Thyroid gland (tissue), 4 donors: ENCODE measurements at regions of chr17 and their contacts with region 1.

Region 1: GRCh38 chr17:42819944-42820535 is 4.0 kb downstream of the BECN1 start:
- DNase-seq: peak; percentile 35 to 39
- H3K4me3 ChIP-seq: no peak overlapping the region
- H3K27ac ChIP-seq: no peak overlapping the region
- H3K4me1 ChIP-seq: peaks cover 4 to 18% of the 10 kb centered on the region in 2 donors
- H3K27me3 ChIP-seq: no peaks in the 10 kb centered on the region
- CTCF ChIP-seq: peak; percentile 11 to 54 (median 32)
- POLR2A ChIP-seq: no peak

Region 2: DNA sequence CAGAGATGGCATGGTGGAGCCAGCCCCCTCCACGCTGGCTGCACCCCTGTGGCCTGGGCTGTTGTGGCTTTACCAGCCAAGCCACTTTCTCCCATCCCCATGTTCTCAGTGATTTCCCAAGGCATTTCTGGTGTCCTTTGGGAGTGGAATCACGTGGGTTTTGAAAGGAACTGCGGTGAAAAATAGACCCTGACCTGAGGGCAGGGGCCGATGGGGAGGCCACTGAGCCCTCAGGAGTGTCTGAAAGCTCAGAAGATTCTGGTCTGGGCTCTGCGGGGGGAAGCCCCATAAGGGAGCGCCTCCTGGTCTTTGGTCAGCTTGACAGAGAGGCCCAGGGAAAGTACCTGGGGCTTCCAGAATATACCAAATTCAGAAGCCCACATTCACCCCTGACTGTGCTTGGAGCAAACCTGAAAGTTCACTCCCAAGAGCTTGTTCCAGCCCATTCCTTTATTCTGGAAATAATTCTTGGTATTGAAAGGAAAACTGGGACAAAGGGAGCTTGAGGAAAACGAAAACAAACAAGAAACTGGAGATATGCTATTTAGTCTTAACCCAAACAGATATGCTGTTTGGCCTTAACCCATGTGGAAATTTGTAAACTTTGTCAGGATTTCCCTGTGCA is 307.3 kb before region 1 on chr17:
- intact Hi-C with region 1: no loop called
- DNase-seq: no peak
- H3K4me3 ChIP-seq: no peak overlapping the region
- H3K27ac ChIP-seq: peak overlapping the region; percentile 45 to 76 (median 56)
- H3K4me1 ChIP-seq: peaks cover 10 to 58% of the 10 kb centered on the region in 2 donors
- H3K27me3 ChIP-seq: no peaks in the 10 kb centered on the region
- CTCF ChIP-seq: no peak
- POLR2A ChIP-seq: no peak

Region 3: DNA sequence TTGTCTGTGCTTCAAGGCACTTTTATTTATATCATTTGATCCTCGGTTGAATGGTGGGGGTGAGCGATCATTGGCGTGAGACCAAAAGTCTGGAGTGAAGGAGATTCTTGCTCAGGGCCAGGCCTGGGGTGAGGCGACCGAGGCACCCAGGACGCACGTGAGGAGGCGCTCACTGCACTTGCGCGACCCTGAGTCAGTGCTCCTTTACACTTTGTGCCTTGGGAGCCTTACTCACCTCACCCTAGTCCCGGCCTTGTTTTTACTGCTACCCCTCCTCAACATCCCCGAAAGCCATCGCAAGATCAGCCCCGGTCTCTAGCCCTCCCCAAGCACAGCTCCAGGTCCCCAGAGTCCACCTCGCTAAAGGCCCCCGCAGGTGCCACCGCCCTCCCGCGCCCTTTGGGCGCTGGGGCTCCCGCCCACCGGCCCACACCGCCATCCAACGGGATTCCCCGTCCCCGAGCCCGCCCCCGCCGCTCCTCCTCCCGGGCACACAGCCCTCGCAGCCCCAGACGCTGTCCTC is 75.7 kb before region 1 on chr17:
- intact Hi-C with region 1: loop called (anchors 10 kb)
- DNase-seq: peak; percentile 84 to 86
- H3K4me3 ChIP-seq: peak overlapping the region; percentile 33 to 69 (median 58)
- H3K27ac ChIP-seq: peak overlapping the region; percentile 82 to 93 (median 92)
- H3K4me1 ChIP-seq: peaks cover 10 to 29% of the 10 kb centered on the region in 2 donors
- H3K27me3 ChIP-seq: no peaks in the 10 kb centered on the region
- CTCF ChIP-seq: peak in 1 of 6 experiments; percentile 1
- POLR2A ChIP-seq: no peak

Region 4: GRCh38 chr17:43126911-43127290 is 306.9 kb after region 1 on chr17:
- intact Hi-C with region 1: no loop called
- DNase-seq: no peak
- H3K4me3 ChIP-seq: no peak overlapping the region
- H3K27ac ChIP-seq: no peak overlapping the region
- H3K4me1 ChIP-seq: peaks cover 13 to 18% of the 10 kb centered on the region in 2 donors
- H3K27me3 ChIP-seq: no peaks in the 10 kb centered on the region
- CTCF ChIP-seq: no peak
- POLR2A ChIP-seq: no peak